Transverse colon (tissue), 4 donors: ENCODE measurements at regions of chr12 and their contacts with region 1.

Region 1: GRCh38 chr12:121351820-121352681 is at the start of gene ANAPC5:
- DNase-seq: peak; percentile 95
- H3K4me3 ChIP-seq: peak within 1 kb of the TSS; percentile 70 to 96 (median 84)
- H3K27ac ChIP-seq: peak within 1 kb of the TSS; percentile 89 to 93 (median 90)
- H3K4me1 ChIP-seq: peaks cover 0 to 23% (median 16%) of the 10 kb centered on the region in 4 donors
- H3K27me3 ChIP-seq: no peaks in the 10 kb centered on the region
- CTCF ChIP-seq: peak in 1 of 5 experiments; percentile 35
- EP300 ChIP-seq: no peak
- POLR2A ChIP-seq: peak; percentile 89
- total RNA-seq, gene ANAPC5: 101 to 184 (median 129) TPM

Region 2: GRCh38 chr12:121279507-121279915 is 72.5 kb before region 1 on chr12:
- in situ Hi-C with region 1: no loop called
- intact Hi-C with region 1: no loop called
- DNase-seq: peak; percentile 23
- H3K4me3 ChIP-seq: no peak overlapping the region
- H3K27ac ChIP-seq: peak overlapping the region in 1 of 4 donors; percentile 38
- H3K4me1 ChIP-seq: no peaks in the 10 kb centered on the region
- H3K27me3 ChIP-seq: no peaks in the 10 kb centered on the region
- CTCF ChIP-seq: no peak
- EP300 ChIP-seq: no peak
- POLR2A ChIP-seq: no peak

Region 3: GRCh38 chr12:121399391-121400331 is 47.6 kb after region 1 on chr12 and contains the start of gene RNF34:
- in situ Hi-C with region 1: no loop called
- intact Hi-C with region 1: loop called (anchors 5 kb)
- DNase-seq: peak; percentile 99
- H3K4me3 ChIP-seq: peak within 1 kb of the TSS; percentile 68 to 94 (median 74)
- H3K27ac ChIP-seq: peak within 1 kb of the TSS; percentile 94 to 98 (median 96)
- H3K4me1 ChIP-seq: peaks cover 8 to 38% (median 20%) of the 10 kb centered on the region in 4 donors
- H3K27me3 ChIP-seq: no peaks in the 10 kb centered on the region
- CTCF ChIP-seq: no peak
- EP300 ChIP-seq: no peak
- POLR2A ChIP-seq: peak; percentile 99
- total RNA-seq, gene RNF34: 46.8 to 63.2 (median 49.8) TPM

Region 4: DNA sequence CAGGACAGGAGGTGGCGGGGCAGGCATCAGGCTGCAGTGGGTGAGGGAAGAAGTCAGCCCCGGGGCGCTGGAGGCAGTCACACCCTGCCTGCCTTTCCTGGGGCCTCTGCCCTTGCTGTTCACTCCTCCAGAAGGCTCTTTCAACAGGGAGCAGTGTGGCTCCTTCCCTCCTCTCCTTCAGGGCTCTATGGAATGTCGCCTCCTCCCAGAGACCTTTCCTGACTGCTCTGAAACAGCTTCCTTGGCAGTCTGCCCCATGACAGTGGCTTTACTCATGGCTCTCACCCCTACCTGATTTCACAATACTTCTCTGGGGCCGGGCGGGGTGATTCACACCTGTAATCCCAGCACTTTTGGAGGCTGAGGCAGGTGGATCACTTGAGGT is 434.4 kb after region 1 on chr12:
- in situ Hi-C with region 1: no loop called
- intact Hi-C with region 1: no loop called
- DNase-seq: peak; percentile 88
- H3K4me3 ChIP-seq: no peak overlapping the region
- H3K27ac ChIP-seq: peak overlapping the region; percentile 18 to 100 (median 88)
- H3K4me1 ChIP-seq: peaks cover 3 to 71% (median 12%) of the 10 kb centered on the region in 4 donors
- H3K27me3 ChIP-seq: no peaks in the 10 kb centered on the region
- CTCF ChIP-seq: no peak
- EP300 ChIP-seq: no peak
- POLR2A ChIP-seq: peak; percentile 61